ENCODE measurements at regions of chr10 and their contacts with region 1.

Region 1: GRCh38 chr10:103470761-103471653 is 8.0 kb downstream of the CALHM3 start:
- DNase-seq: peak; percentile 84
- ATAC-seq: peak; percentile 92
- H3K4me3 Mint-ChIP-seq: peak overlapping the region; percentile 77
- H3K27ac Mint-ChIP-seq: peak overlapping the region; percentile 98
- H3K4me1 Mint-ChIP-seq: peaks cover 63% of the 10 kb centered on the region
- H3K27me3 Mint-ChIP-seq: no peaks in the 10 kb centered on the region

Region 2: GRCh38 chr10:103445767-103446567 is 25.0 kb before region 1 on chr10:
- POLR2A ChIA-PET with region 1: interaction called, 89 read pairs
- DNase-seq: no peak
- ATAC-seq: no peak
- H3K4me3 Mint-ChIP-seq: no peak overlapping the region
- H3K27ac Mint-ChIP-seq: peak overlapping the region; percentile 58
- H3K4me1 Mint-ChIP-seq: peaks cover 37% of the 10 kb centered on the region
- H3K27me3 Mint-ChIP-seq: no peaks in the 10 kb centered on the region

Region 3: DNA sequence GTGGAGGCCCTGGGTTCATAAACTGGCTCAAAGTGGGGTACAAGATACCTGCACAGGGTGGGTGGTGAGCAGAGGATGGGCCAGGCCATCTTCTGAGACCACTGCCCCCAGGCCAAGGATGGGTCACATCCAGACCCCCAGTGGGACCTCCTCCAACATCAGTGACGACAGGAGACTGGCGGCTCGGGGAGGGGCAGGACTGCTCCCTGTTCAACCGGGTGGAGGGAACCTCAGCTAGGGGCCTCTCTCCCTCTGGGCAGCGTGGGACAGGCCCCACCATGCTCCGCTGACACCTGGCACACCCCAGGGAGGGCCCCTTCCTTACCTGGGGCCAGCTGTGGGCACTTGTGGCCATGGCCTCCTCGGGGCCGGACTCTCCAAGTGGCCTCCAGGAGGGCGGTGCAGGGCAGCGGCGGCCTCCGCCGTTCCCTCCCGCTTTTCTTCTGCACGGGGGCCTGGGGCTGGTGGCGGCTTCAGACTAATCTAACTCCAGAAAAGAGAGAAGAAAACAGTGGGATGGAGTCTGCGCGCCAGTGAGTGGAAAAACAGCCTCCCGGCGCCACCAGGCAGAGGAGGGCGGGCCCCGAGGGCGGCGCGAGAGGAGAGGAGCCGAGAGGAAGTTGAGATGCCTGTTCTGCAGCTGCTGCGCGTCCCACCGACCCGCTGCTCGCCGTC is 19.0 kb before region 1 on chr10 and contains the start of gene CALHM2:
- POLR2A ChIA-PET with region 1: interaction called, 89 read pairs
- DNase-seq: peak; percentile 75
- ATAC-seq: peak; percentile 78
- H3K4me3 Mint-ChIP-seq: peak within 1 kb of the TSS; percentile 96
- H3K27ac Mint-ChIP-seq: peak within 1 kb of the TSS; percentile 89
- H3K4me1 Mint-ChIP-seq: peaks cover 49% of the 10 kb centered on the region
- H3K27me3 Mint-ChIP-seq: no peaks in the 10 kb centered on the region
- total RNA-seq, gene CALHM2: 117 to 124 TPM

Region 4: DNA sequence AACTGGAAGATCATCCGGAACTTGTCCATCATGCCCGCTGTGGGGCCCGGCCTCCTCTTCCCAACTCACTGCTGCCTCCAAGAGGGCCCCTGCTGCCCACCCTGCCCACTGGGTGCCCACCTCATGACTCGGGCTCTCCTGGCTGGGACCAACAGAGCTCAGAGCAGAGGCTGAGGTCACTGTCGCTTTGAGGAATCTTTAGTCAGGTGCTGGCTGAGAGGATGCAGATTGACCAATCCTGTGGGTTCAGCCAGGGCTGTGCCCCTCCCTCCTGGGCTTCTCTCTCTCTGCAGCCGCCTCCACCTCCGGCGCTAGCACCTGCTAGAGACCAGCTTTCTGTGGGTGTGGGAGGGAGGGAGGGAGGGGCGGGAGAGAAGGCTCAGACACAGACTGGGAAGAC is 12.3 kb before region 1 on chr10 and contains the start of gene CALHM1:
- POLR2A ChIA-PET with region 1: interaction called, 89 read pairs
- DNase-seq: no peak
- ATAC-seq: peak; percentile 83
- H3K4me3 Mint-ChIP-seq: peak within 1 kb of the TSS; percentile 44
- H3K27ac Mint-ChIP-seq: peak within 1 kb of the TSS; percentile 81
- H3K4me1 Mint-ChIP-seq: peaks cover 24% of the 10 kb centered on the region
- H3K27me3 Mint-ChIP-seq: peaks cover 5% of the 10 kb centered on the region
- total RNA-seq, gene CALHM1: 0.74 to 0.94 TPM